AG04449 (cell line): ENCODE measurements at regions of chr12 and their contacts with region 1.

Region 1: GRCh38 chr12:76031537-76032073 is at the start of gene PHLDA1:
- DNase-seq: peak; percentile 79
- H3K4me3 ChIP-seq: peak within 1 kb of the TSS; percentile 95
- CTCF ChIP-seq: peak; percentile 74

Region 2: GRCh38 chr12:75658901-75659383 is 372.7 kb before region 1 on chr12:
- CTCF ChIA-PET with region 1: interaction called, 3 read pairs
- POLR2A ChIA-PET with region 1: interaction called, 19 read pairs
- DNase-seq: no peak
- H3K4me3 ChIP-seq: no peak overlapping the region
- CTCF ChIP-seq: no peak

Region 3: DNA sequence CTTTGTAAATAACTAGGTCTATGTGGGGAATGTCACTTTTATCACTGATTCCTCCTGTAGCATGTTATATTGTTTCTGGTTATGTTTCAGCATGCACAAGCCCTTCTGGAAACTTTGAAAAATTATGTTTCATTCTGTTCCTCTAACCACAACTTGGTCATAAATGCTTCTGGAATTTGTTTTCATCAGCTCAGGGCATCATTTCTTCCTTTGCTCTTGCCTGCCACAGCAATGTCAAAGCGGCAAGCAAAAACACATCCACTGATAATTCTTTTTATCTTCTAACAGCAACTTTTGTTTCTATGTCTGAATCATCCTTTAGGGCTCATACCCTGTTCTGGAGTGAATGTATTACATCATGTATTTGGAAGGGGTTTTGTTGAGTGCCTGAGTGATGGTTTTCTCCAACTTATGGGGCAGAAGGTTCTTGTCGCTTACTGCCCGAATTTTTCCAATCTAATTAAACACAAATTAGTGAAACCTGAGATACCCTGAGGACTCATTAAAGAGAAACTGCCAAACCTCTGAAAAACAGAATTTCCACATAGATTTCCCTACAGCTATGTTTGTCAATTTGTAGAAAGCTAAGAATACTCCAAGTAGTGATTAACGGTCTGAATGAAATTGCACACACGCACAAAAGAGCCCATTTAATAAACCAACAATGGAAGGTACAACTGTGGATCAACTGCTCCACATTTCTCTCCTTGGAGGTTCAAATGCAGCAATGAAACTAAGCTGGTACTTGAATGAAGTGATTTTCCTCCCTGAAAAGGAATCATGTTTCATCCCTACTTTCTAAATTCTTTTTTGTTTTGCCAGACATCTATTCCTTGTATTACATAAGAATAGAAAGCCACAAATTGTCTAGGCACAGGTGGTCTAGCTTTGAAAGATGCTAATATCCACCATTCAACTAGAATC is 346.7 kb before region 1 on chr12:
- CTCF ChIA-PET with region 1: interaction called, 3 read pairs
- POLR2A ChIA-PET with region 1: interaction called, 10 read pairs
- DNase-seq: peak; percentile 79
- H3K4me3 ChIP-seq: no peak overlapping the region
- CTCF ChIP-seq: no peak

Region 4: DNA sequence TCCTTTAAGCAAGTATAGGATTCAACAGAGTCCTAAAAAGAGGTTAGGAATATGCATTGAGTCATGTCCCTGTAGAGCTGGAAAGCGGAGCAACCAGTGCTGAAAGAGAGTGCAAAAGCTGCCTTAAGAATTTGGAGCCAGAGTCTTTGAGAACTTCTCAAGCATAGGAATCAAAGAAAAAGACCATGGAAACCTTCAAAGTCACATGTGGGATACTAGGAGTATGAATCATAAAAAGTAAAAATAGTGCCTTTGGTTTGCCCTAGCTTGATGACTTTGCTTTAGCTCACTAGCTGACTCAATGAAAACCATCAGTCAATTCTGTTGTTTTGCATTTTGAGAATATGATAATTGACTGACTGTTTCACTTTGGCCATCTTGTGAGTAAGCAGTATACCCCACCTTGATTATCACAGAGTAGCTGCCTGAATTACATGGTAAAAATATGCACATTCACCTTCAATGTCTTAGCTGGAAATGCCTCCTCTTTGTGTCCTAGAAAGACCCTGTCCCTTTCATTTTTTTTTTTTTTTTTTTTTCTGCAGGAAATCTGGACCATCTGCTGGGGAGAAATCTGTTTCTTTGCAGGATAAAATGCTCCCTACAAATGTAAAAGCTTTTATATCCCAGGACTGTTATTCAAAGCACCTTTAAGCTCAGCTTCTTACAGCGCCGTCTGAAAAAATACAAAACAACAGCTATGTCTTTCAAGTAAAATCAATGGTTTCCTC is 271.6 kb before region 1 on chr12:
- CTCF ChIA-PET with region 1: no interaction called
- POLR2A ChIA-PET with region 1: interaction called, 13 read pairs
- DNase-seq: peak; percentile 51
- H3K4me3 ChIP-seq: no peak overlapping the region
- CTCF ChIP-seq: no peak

Region 5: DNA sequence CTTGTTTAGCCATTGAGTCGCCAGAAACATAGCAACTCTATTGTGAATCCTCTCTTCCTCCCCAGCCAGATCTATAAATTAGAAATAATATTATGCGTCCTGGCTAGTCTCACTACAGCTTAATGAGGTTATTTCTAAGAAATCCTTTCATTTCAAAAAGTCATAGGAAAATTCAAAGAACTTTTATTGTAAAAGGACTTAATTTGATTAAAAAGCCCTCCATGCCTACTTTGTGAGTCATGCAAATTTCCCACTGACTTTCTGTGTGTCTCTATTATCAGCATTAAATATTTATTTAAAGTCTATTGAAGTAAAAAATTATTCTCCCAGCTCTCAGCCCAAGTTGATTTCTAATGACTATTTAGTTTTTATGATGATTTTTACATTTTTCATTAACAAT is 160.7 kb before region 1 on chr12:
- CTCF ChIA-PET with region 1: no interaction called
- POLR2A ChIA-PET with region 1: no interaction called
- DNase-seq: no peak
- H3K4me3 ChIP-seq: no peak overlapping the region
- CTCF ChIP-seq: no peak

Region 6: DNA sequence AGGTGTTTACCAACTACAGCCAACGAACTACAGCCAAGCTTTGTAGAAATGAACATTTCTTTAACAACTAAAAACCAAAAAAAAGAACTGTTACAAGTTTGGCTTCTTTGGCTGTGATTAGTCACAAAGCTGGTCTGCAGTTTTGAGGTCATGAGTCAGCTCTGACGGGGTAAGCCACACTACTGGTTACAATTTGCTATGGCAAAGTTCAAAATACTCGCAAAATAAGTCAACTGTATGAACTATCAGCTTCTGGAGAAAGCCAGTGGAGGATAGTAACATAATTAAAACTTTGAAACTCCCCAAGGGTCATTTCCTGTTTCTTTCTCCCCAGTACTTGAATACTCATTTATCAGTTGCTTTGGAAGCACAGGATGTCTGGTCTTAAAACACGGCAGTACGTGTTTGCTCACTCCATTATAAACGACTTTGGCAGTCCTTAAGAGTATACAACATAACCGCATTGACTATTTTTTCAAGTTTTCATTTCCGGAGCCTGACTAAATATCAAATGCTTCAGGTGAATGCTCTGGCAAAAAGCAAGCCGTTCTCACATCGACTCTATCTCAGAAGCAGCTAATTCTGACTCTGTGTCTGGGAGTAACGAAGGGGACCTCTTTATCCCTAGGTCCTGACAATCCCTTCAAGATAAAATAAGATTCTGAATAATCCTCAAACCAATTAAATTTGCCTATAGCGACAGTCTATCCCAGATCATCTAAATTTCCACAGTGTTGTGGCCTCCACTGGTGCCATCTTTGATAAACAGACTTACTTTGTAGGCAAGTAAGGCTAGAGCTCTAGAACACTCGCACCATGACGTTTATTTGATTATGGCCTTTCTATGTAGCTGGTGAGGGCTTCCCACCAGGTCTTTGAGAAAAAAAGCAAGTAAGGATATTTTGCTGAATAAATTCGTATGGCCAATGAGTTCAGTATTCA is 10.6 kb before region 1 on chr12:
- CTCF ChIA-PET with region 1: no interaction called
- POLR2A ChIA-PET with region 1: interaction called, 22 read pairs
- DNase-seq: peak; percentile 90
- H3K4me3 ChIP-seq: no peak overlapping the region
- CTCF ChIP-seq: no peak

Region 7: DNA sequence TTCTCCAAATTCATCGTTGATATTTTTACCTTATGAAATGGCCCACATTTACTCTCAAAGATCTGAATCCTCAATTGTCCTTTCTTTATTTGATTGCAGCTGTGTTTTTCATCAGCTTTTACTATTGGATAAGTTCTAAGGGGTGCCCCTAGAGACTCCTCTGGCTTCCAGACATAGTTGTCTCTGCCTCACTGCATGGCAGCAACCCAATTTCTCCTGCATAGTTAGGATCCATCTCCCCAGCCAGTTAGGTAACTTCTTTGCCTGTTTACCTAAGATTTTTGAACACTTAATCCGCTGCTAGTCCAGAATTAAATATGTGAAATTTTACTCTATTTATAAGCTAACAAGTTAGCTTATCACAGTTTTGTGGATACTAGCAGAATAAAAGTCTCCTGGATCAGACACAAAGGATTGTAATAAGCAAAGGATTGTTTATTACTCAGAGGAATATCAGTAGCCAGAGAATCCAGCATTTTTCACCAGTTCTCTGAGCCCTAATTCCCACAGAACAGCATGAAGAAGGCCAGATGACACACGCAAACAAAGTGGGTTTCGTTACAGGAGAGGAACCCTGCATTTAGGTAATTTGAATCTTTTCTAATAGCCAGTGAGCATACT is 215.5 kb after region 1 on chr12:
- CTCF ChIA-PET with region 1: no interaction called
- POLR2A ChIA-PET with region 1: no interaction called
- DNase-seq: no peak
- H3K4me3 ChIP-seq: no peak overlapping the region
- CTCF ChIP-seq: no peak

Region 8: GRCh38 chr12:76348079-76348901 is 316.7 kb after region 1 on chr12 and contains the start of gene BBS10:
- CTCF ChIA-PET with region 1: interaction called, 5 read pairs
- POLR2A ChIA-PET with region 1: interaction called, 18 read pairs
- DNase-seq: peak; percentile 31
- H3K4me3 ChIP-seq: peak within 1 kb of the TSS; percentile 84
- CTCF ChIP-seq: peak; percentile 59